ENCODE measurements at regions of chr6 and their contacts with region 1.

Region 1: GRCh38 chr6:116238083-116238482 is 15.8 kb downstream of the TSPYL4 start:
- DNase-seq: no peak
- ATAC-seq: no peak
- H3K4me3 ChIP-seq: no peak overlapping the region
- H3K4me3 Mint-ChIP-seq: no peak overlapping the region
- H3K27ac ChIP-seq: no peak overlapping the region
- H3K27ac Mint-ChIP-seq: no peak overlapping the region
- H3K4me1 ChIP-seq: no peaks in the 10 kb centered on the region
- H3K4me1 Mint-ChIP-seq: no peaks in the 10 kb centered on the region
- H3K27me3 ChIP-seq: no peaks in the 10 kb centered on the region
- H3K27me3 Mint-ChIP-seq: no peaks in the 10 kb centered on the region

Region 2: GRCh38 chr6:116016846-116017545 is 221.1 kb before region 1 on chr6:
- CTCF ChIA-PET with region 1: no interaction called
- POLR2A ChIA-PET with region 1: no interaction called
- DNase-seq: no peak
- ATAC-seq: no peak
- H3K4me3 ChIP-seq: no peak overlapping the region
- H3K4me3 Mint-ChIP-seq: no peak overlapping the region
- H3K27ac ChIP-seq: no peak overlapping the region
- H3K27ac Mint-ChIP-seq: no peak overlapping the region
- H3K4me1 ChIP-seq: no peaks in the 10 kb centered on the region
- H3K4me1 Mint-ChIP-seq: peaks cover 0 to 2% (median 0%) of the 10 kb centered on the region in 3 donors
- H3K27me3 ChIP-seq: no peaks in the 10 kb centered on the region
- H3K27me3 Mint-ChIP-seq: peaks cover 28 to 44% of the 10 kb centered on the region in 2 donors

Region 3: DNA sequence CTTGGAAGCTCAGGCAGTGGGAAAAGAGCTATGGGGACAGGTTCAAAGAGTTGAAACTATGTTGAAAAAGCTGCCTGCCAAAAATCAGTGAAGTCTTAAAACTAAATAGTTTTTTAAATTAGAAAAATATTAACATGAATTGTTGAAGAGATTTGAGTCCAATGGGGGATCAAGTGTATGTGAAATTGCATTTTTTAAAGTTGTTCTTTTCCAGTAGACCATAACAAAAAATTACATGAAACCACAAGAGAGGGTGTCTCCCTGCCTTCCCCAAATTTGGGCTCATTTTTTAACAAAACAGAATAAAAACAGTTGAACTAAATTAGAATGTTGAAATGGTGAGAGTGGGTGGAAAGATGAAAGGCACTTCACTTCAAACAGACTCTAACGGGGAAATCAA is 80.7 kb before region 1 on chr6:
- CTCF ChIA-PET with region 1: no interaction called
- POLR2A ChIA-PET with region 1: interaction called in 1 of 2 experiments, 12 read pairs
- DNase-seq: no peak
- ATAC-seq: no peak
- H3K4me3 ChIP-seq: no peak overlapping the region
- H3K4me3 Mint-ChIP-seq: no peak overlapping the region
- H3K27ac ChIP-seq: no peak overlapping the region
- H3K27ac Mint-ChIP-seq: no peak overlapping the region
- H3K4me1 ChIP-seq: no peaks in the 10 kb centered on the region
- H3K4me1 Mint-ChIP-seq: peaks cover 0 to 18% (median 12%) of the 10 kb centered on the region in 3 donors
- H3K27me3 ChIP-seq: no peaks in the 10 kb centered on the region
- H3K27me3 Mint-ChIP-seq: no peaks in the 10 kb centered on the region

Region 4: GRCh38 chr6:116741571-116741970 is 503.5 kb after region 1 on chr6:
- CTCF ChIA-PET with region 1: no interaction called
- POLR2A ChIA-PET with region 1: no interaction called
- DNase-seq: no peak
- ATAC-seq: no peak
- H3K4me3 ChIP-seq: no peak overlapping the region
- H3K4me3 Mint-ChIP-seq: no peak overlapping the region
- H3K27ac ChIP-seq: no peak overlapping the region
- H3K27ac Mint-ChIP-seq: no peak overlapping the region
- H3K4me1 ChIP-seq: no peaks in the 10 kb centered on the region
- H3K4me1 Mint-ChIP-seq: no peaks in the 10 kb centered on the region
- H3K27me3 ChIP-seq: no peaks in the 10 kb centered on the region
- H3K27me3 Mint-ChIP-seq: peaks cover 0 to 3% of the 10 kb centered on the region in 2 donors

Measured in T-cell (primary cell).